T-cell (primary cell): ENCODE measurements at regions of chr1 and their contacts with region 1.

Region 1: GRCh38 chr1:100459358-100460114 is 78.4 kb upstream of the GPR88 start:
- DNase-seq: peak; percentile 26 to 86 (median 58)
- ATAC-seq: peak; percentile 77 to 89 (median 83)
- H3K4me3 ChIP-seq: no peak overlapping the region
- H3K4me3 Mint-ChIP-seq: no peak overlapping the region
- H3K27ac ChIP-seq: peak overlapping the region; percentile 22
- H3K27ac Mint-ChIP-seq: peak overlapping the region; percentile 84 to 85
- H3K4me1 ChIP-seq: peaks cover 13 to 14% of the 10 kb centered on the region in 2 experiments
- H3K4me1 Mint-ChIP-seq: peaks cover 58 to 64% (median 61%) of the 10 kb centered on the region in 3 donors
- H3K27me3 ChIP-seq: no peaks in the 10 kb centered on the region
- H3K27me3 Mint-ChIP-seq: no peaks in the 10 kb centered on the region

Region 2: GRCh38 chr1:99935534-99935933 is 524.0 kb before region 1 on chr1:
- CTCF ChIA-PET with region 1: no interaction called
- POLR2A ChIA-PET with region 1: no interaction called
- DNase-seq: no peak
- ATAC-seq: no peak
- H3K4me3 ChIP-seq: no peak overlapping the region
- H3K4me3 Mint-ChIP-seq: no peak overlapping the region
- H3K27ac ChIP-seq: no peak overlapping the region
- H3K27ac Mint-ChIP-seq: no peak overlapping the region
- H3K4me1 ChIP-seq: no peaks in the 10 kb centered on the region
- H3K4me1 Mint-ChIP-seq: no peaks in the 10 kb centered on the region
- H3K27me3 ChIP-seq: no peaks in the 10 kb centered on the region
- H3K27me3 Mint-ChIP-seq: peaks cover 10 to 16% of the 10 kb centered on the region in 2 donors

Region 3: GRCh38 chr1:100351095-100351891 is 108.2 kb before region 1 on chr1:
- CTCF ChIA-PET with region 1: interaction called, 8 to 26 read pairs
- POLR2A ChIA-PET with region 1: interaction called in 1 of 2 experiments, 11 read pairs
- DNase-seq: peak; percentile 71 to 92 (median 85)
- ATAC-seq: peak; percentile 66 to 79 (median 70)
- H3K4me3 ChIP-seq: peak overlapping the region; percentile 67 to 96
- H3K4me3 Mint-ChIP-seq: peak overlapping the region; percentile 90 to 100 (median 96)
- H3K27ac ChIP-seq: peak overlapping the region; percentile 87
- H3K27ac Mint-ChIP-seq: peak overlapping the region; percentile 95 to 98
- H3K4me1 ChIP-seq: peaks cover 16 to 22% of the 10 kb centered on the region in 2 experiments
- H3K4me1 Mint-ChIP-seq: peaks cover 27 to 39% (median 30%) of the 10 kb centered on the region in 3 donors
- H3K27me3 ChIP-seq: no peaks in the 10 kb centered on the region
- H3K27me3 Mint-ChIP-seq: no peaks in the 10 kb centered on the region

Region 4: GRCh38 chr1:100387209-100387608 is 72.3 kb before region 1 on chr1:
- CTCF ChIA-PET with region 1: interaction called, 11 to 12 read pairs
- POLR2A ChIA-PET with region 1: interaction called, 3 to 8 read pairs
- DNase-seq: no peak
- ATAC-seq: no peak
- H3K4me3 ChIP-seq: peak overlapping the region in 1 of 2 donors; percentile 16
- H3K4me3 Mint-ChIP-seq: peak overlapping the region; percentile 63 to 67 (median 66)
- H3K27ac ChIP-seq: peak overlapping the region; percentile 78
- H3K27ac Mint-ChIP-seq: peak overlapping the region; percentile 82 to 94
- H3K4me1 ChIP-seq: peaks cover 46 to 54% of the 10 kb centered on the region in 2 experiments
- H3K4me1 Mint-ChIP-seq: peaks cover 89 to 95% (median 90%) of the 10 kb centered on the region in 3 donors
- H3K27me3 ChIP-seq: no peaks in the 10 kb centered on the region
- H3K27me3 Mint-ChIP-seq: no peaks in the 10 kb centered on the region

Region 5: DNA sequence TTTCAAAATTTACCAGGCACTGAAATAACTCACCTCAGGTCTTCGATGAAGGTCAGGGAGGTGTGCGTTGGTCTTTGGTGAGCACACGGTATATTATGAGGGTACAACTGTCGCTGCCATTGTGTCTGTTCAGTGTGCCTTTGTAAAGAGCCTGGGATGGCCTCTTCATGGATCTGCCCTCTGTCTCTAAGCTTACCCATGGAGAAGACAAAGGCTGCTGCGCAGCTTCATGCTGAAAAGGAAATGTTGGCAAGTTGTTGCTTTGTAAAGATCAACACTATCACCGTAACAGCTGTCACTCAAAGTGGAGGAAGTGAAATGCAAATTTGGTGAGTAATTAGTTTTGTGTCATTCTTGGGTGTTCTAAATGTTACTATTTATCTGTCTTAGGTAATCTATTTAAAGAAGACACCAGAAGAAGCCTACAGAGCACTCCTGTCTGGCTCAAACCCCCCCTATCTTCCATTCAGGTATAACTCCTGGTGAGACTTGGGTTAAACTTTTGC is 35.7 kb before region 1 on chr1:
- CTCF ChIA-PET with region 1: interaction called, 6 to 17 read pairs
- POLR2A ChIA-PET with region 1: interaction called in 1 of 2 experiments, 8 read pairs
- DNase-seq: peak in 17 of 35 experiments; percentile 6 to 56 (median 20)
- ATAC-seq: peak; percentile 69 to 76 (median 74)
- H3K4me3 ChIP-seq: peak overlapping the region in 1 of 2 donors; percentile 35
- H3K4me3 Mint-ChIP-seq: peak overlapping the region; percentile 80 to 89 (median 82)
- H3K27ac ChIP-seq: peak overlapping the region; percentile 71
- H3K27ac Mint-ChIP-seq: peak overlapping the region; percentile 97 to 98
- H3K4me1 ChIP-seq: peaks cover 28 to 30% of the 10 kb centered on the region in 2 experiments
- H3K4me1 Mint-ChIP-seq: peaks cover 61 to 82% (median 81%) of the 10 kb centered on the region in 3 donors
- H3K27me3 ChIP-seq: no peaks in the 10 kb centered on the region
- H3K27me3 Mint-ChIP-seq: no peaks in the 10 kb centered on the region

Region 6: GRCh38 chr1:100443811-100444571 is 15.5 kb before region 1 on chr1:
- CTCF ChIA-PET with region 1: interaction called, 6 to 44 read pairs
- POLR2A ChIA-PET with region 1: no interaction called
- DNase-seq: peak in 7 of 35 experiments; percentile 3 to 66 (median 18)
- ATAC-seq: peak; percentile 4 to 29 (median 27)
- H3K4me3 ChIP-seq: no peak overlapping the region
- H3K4me3 Mint-ChIP-seq: peak overlapping the region; percentile 46 to 75 (median 67)
- H3K27ac ChIP-seq: peak overlapping the region; percentile 97
- H3K27ac Mint-ChIP-seq: peak overlapping the region; percentile 95 to 98
- H3K4me1 ChIP-seq: peaks cover 56 to 80% of the 10 kb centered on the region in 2 experiments
- H3K4me1 Mint-ChIP-seq: peaks cover 85 to 89% (median 88%) of the 10 kb centered on the region in 3 donors
- H3K27me3 ChIP-seq: no peaks in the 10 kb centered on the region
- H3K27me3 Mint-ChIP-seq: no peaks in the 10 kb centered on the region

Region 7: GRCh38 chr1:100494393-100495084 is 35.0 kb after region 1 on chr1:
- CTCF ChIA-PET with region 1: no interaction called
- POLR2A ChIA-PET with region 1: no interaction called
- DNase-seq: no peak
- ATAC-seq: no peak
- H3K4me3 ChIP-seq: no peak overlapping the region
- H3K4me3 Mint-ChIP-seq: no peak overlapping the region
- H3K27ac ChIP-seq: no peak overlapping the region
- H3K27ac Mint-ChIP-seq: peak overlapping the region in 1 of 2 donors; percentile 2
- H3K4me1 ChIP-seq: no peaks in the 10 kb centered on the region
- H3K4me1 Mint-ChIP-seq: peaks cover under 1 to 9% (median 4%) of the 10 kb centered on the region in 3 donors
- H3K27me3 ChIP-seq: no peaks in the 10 kb centered on the region
- H3K27me3 Mint-ChIP-seq: no peaks in the 10 kb centered on the region